Activated CD8-positive, alpha-beta T cell treated with anti-CD3 and anti-CD28 coated beads for 36 hours (primary cell): ENCODE measurements at regions of chr10 and their contacts with region 1.

Region 1: DNA sequence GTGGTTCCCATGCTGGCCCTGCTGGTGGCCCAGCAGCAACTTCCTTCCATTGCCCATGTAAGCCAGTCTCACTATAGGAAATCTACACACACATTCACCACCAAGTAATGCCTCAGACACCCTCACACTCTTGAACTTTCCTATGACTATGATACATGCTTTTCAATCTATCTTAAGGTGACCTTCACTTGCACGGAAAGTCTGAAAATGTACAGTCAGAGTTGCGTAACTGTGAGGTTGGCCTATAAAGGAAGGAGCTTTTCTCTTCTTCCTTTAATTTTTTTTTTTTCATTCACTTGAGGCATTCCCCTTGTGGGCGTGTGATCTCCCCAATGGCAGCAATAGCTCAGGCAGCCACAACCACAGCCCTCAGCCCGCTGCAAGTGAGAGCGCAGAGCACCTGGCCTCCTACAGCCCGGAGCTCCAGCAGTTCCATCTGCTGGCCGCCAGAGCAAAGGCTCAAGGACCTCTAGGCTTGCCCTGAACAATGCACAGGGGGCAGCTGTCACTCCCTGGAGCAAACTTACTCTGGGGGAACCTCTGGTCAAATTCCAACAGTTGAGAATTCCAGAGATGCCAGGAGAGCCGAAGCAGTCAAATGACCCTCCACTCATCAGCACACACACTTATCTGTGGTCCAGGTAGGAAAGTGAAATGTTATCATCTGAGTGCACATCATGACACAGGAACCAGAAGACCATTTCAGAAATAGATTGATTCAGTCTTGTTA is 123.1 kb upstream of the ADO start:
- DNase-seq: peak; percentile 95
- ATAC-seq: peak; percentile 93
- H3K4me3 Mint-ChIP-seq: no peak overlapping the region
- H3K27ac Mint-ChIP-seq: peak overlapping the region; percentile 89
- H3K4me1 Mint-ChIP-seq: peaks cover 40% of the 10 kb centered on the region
- H3K27me3 Mint-ChIP-seq: no peaks in the 10 kb centered on the region
- CTCF ChIP-seq: peak; percentile 72

Region 2: DNA sequence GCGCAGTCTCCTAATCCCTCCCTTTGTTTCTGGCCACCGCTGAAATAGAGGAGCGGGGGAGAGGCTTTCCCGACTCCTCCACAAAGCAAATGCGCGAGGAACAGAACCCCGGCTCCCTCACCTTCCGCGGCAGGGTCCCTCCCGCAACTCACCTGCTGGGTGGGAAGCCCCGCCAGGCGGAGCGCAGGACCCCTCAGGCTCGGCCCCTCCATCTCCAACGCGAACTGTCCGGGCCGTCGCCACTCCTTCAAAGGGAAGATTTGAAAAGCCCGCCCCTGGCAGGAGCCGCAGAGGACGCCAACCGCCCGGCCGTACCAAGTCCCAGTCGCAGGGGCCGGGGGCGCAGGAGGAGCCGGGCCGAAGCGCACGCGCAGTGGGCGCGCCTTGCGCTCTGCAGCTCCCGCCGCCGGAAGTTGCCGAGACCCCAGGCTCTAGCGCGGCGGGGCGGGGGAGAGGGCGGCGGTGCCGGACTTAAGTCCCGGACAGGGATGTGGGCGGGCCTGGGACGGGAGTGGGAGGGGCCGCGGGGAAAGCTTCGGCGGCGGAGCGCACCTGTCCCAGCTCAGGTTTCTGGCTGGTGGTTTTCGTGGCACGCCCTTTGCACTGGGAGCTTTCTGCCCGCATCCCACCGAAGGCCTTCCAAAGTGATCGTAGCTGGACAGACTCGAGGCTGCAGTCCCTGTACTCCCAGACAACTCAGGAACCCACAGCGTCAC is 412.8 kb before region 1 on chr10 and contains the start of gene RTKN2:
- CTCF ChIA-PET with region 1: no interaction called
- POLR2A ChIA-PET with region 1: no interaction called
- intact Hi-C with region 1: no loop called
- DNase-seq: peak; percentile 72
- ATAC-seq: peak; percentile 91
- H3K4me3 Mint-ChIP-seq: peak within 1 kb of the TSS; percentile 71
- H3K27ac Mint-ChIP-seq: no peak within 1 kb of the TSS
- H3K4me1 Mint-ChIP-seq: peaks cover 8% of the 10 kb centered on the region
- H3K27me3 Mint-ChIP-seq: peaks cover 30% of the 10 kb centered on the region
- CTCF ChIP-seq: no peak
- total RNA-seq, gene RTKN2: 1.1 to 1.4 TPM

Region 3: DNA sequence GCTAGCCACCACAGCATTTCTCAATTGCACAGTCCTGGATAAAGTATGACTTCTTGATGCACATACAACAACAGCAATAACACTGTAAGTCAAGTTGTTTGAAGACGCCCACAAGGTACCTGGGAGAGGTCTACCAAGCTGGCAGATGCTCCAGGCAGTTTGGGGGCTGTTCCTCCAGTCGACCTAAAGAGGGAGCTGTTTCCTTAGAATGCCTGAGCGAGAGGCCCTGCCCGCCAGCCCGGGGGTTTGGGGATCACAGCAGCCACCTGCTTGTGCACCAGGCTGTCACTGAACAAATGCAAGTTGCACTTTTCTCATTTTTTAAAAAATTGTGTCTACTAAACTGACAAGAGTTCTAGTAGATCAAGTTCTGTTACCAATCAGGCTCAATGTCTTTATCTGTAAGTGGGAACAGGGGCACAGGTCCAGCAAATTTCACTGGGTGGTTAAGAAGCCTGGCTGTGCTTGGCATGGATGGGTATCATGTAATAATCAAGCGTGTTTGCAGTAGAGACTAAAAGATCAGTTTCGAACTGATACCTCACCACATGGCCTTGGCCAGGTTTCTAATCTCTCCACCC is 70.6 kb before region 1 on chr10:
- CTCF ChIA-PET with region 1: interaction called, 27 read pairs
- POLR2A ChIA-PET with region 1: interaction called, 4 read pairs
- intact Hi-C with region 1: loop called (anchors 2 kb)
- DNase-seq: peak; percentile 86
- ATAC-seq: peak; percentile 81
- H3K4me3 Mint-ChIP-seq: no peak overlapping the region
- H3K27ac Mint-ChIP-seq: no peak overlapping the region
- H3K4me1 Mint-ChIP-seq: peaks cover 40% of the 10 kb centered on the region
- H3K27me3 Mint-ChIP-seq: peaks cover 4% of the 10 kb centered on the region
- CTCF ChIP-seq: peak; percentile 87

Region 4: GRCh38 chr10:62647375-62648092 is 33.8 kb before region 1 on chr10:
- CTCF ChIA-PET with region 1: interaction called, 8 read pairs
- POLR2A ChIA-PET with region 1: no interaction called
- intact Hi-C with region 1: loop called (anchors 2 kb)
- DNase-seq: peak; percentile 67
- ATAC-seq: peak; percentile 60
- H3K4me3 Mint-ChIP-seq: peak overlapping the region; percentile 0
- H3K27ac Mint-ChIP-seq: peak overlapping the region; percentile 18
- H3K4me1 Mint-ChIP-seq: peaks cover 50% of the 10 kb centered on the region
- H3K27me3 Mint-ChIP-seq: no peaks in the 10 kb centered on the region
- CTCF ChIP-seq: no peak

Region 5: DNA sequence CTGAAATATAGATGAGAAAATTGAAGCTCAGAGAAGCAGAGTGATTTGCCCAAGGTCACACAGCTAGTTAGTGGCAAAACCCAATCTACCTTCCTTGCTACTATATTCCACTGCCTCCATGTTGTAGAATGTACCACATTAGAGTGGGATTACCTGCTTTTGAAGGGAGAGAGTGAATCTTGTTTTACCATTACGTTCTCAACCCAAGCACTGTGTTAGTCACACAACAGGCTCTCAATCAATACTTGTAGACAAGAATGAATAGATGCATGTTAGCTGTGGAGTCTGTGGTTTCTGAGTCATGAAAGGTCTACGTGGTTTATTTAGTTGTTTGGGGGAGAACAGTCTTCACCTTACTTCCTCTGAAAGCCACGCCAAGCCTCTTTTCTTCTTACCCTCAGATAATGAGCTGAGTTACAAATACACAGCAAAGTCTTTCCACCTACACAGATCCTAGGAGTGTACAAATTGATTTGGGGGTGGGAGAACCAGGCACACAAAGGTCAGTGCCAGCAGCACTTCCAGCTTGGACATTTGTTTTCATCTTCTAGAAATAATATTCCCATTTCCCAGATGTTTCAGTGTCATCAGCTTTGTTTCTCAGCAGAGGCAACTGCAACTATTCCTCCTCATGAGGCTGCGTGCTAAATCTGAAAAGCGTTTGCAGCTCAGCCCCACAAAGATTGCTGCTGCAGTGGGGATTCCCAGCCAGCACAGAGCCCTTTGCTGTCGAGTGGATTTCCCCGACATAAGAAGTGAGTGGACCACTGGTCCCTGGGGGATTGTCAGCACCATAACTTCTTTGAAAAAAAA is 51.7 kb after region 1 on chr10:
- CTCF ChIA-PET with region 1: interaction called, 21 read pairs
- POLR2A ChIA-PET with region 1: interaction called, 22 read pairs
- intact Hi-C with region 1: loop called (anchors 1 kb)
- DNase-seq: peak; percentile 76
- ATAC-seq: peak; percentile 81
- H3K4me3 Mint-ChIP-seq: peak overlapping the region; percentile 49
- H3K27ac Mint-ChIP-seq: no peak overlapping the region
- H3K4me1 Mint-ChIP-seq: peaks cover 21% of the 10 kb centered on the region
- H3K27me3 Mint-ChIP-seq: peaks cover 3% of the 10 kb centered on the region
- CTCF ChIP-seq: no peak

Region 6: DNA sequence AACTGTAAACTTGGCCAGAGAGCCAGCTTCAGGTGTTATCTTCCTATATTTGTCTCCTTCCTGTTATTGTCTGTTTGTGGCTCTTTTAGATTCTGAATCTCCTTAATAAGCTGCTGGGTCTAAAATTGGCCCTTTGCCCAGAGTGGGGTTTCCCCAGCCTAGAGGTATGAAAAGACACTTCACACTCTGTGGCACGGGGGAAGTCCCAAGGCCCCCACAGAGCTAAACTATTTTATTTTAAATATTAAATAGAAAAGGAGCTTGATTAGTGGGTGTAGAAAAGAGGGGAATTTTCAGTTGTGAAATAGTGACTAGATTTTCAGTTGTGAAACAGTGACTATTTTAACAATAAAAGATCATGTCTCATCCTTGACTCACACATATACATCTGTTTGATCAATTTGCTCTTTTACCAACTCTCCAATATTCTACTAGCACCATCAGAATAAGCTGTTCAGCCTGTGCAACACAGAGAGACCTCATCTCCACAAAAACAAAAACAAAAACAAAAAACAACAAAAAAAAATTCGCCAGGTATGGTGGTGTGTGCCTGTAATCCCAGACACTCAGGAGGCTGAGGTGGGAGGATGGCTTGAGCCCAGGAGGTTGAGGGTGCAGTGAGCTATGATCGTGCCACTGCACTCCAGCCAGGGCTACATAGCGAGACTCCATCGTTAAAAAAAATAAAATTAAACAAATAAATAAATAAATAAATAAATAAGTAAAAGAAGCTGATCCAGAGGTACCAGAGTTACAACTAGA is 98.3 kb after region 1 on chr10:
- CTCF ChIA-PET with region 1: interaction called, 18 read pairs
- POLR2A ChIA-PET with region 1: interaction called, 9 read pairs
- intact Hi-C with region 1: loop called (anchors 1 kb)
- DNase-seq: peak; percentile 98
- ATAC-seq: peak; percentile 94
- H3K4me3 Mint-ChIP-seq: no peak overlapping the region
- H3K27ac Mint-ChIP-seq: peak overlapping the region; percentile 80
- H3K4me1 Mint-ChIP-seq: peaks cover 44% of the 10 kb centered on the region
- H3K27me3 Mint-ChIP-seq: no peaks in the 10 kb centered on the region
- CTCF ChIP-seq: no peak

Region 7: GRCh38 chr10:62851442-62851841 is 170.1 kb after region 1 on chr10:
- CTCF ChIA-PET with region 1: interaction called, 3 read pairs
- POLR2A ChIA-PET with region 1: no interaction called
- intact Hi-C with region 1: loop called (anchors 2 kb)
- DNase-seq: peak; percentile 48
- ATAC-seq: no peak
- H3K4me3 Mint-ChIP-seq: no peak overlapping the region
- H3K27ac Mint-ChIP-seq: no peak overlapping the region
- H3K4me1 Mint-ChIP-seq: peaks cover 56% of the 10 kb centered on the region
- H3K27me3 Mint-ChIP-seq: peaks cover 11% of the 10 kb centered on the region
- CTCF ChIP-seq: peak; percentile 63

Region 8: GRCh38 chr10:62885684-62886467 is 204.5 kb after region 1 on chr10:
- CTCF ChIA-PET with region 1: no interaction called
- POLR2A ChIA-PET with region 1: no interaction called
- intact Hi-C with region 1: no loop called
- DNase-seq: no peak
- ATAC-seq: no peak
- H3K4me3 Mint-ChIP-seq: no peak overlapping the region
- H3K27ac Mint-ChIP-seq: no peak overlapping the region
- H3K4me1 Mint-ChIP-seq: no peaks in the 10 kb centered on the region
- H3K27me3 Mint-ChIP-seq: peaks cover 44% of the 10 kb centered on the region
- CTCF ChIP-seq: no peak